Activated naive CD4-positive, alpha-beta T cell treated with anti-CD3 and anti-CD28 coated beads for 36 hours (primary cell): ENCODE measurements at regions of chr6 and their contacts with region 1.

Region 1: DNA sequence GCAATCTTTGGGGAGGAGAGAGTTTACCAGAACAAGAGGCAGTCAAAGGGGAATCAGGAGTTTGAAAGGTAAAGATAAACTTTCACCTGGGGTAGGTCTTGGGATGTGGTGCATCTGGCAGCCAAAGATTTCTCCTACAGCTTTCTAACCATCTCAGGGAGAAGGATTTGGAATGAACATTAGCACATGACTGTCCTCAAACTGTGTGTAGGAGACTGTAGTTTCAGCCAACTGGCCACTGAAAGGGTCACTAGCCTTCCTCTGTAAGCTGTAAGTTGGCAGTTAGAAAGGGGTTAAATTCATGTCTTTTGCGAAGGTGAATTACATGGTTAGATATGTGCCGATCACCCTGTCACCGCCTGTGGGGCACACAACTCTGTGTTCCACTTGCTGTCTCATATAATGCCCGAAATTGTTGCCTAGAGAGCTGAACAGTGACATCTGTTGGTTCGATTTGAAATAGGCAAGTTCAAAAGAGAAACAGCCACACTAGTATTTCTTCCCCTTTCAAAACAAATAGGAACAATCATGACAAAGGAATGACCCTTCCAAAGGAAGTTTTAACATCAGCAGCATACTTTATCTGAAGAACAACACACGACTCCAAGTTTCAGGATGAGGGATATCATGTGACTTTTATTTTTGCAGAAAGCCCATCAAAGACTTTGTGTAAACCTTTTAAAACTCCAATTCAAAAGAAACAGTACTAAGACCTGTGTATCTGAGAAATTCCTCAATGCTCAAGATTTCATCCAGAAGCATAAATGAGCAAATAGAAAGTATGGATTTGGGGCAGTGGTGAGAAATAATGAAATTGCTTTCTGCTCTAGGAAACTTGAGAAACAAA is 1.1 kb upstream of the OPN5 start:
- DNase-seq: peak; percentile 57
- H3K4me3 Mint-ChIP-seq: no peak overlapping the region
- H3K27ac Mint-ChIP-seq: no peak overlapping the region
- H3K4me1 Mint-ChIP-seq: peaks cover 5% of the 10 kb centered on the region
- H3K27me3 Mint-ChIP-seq: peaks cover 6% of the 10 kb centered on the region

Region 2: GRCh38 chr6:46848684-46849360 is 931.9 kb before region 1 on chr6:
- CTCF ChIA-PET with region 1: no interaction called
- intact Hi-C with region 1: loop called (anchors 2 kb)
- DNase-seq: peak; percentile 69
- H3K4me3 Mint-ChIP-seq: peak overlapping the region; percentile 32
- H3K27ac Mint-ChIP-seq: no peak overlapping the region
- H3K4me1 Mint-ChIP-seq: peaks cover 4% of the 10 kb centered on the region
- H3K27me3 Mint-ChIP-seq: peaks cover 30% of the 10 kb centered on the region

Region 3: GRCh38 chr6:47631269-47631772 is 149.4 kb before region 1 on chr6:
- CTCF ChIA-PET with region 1: interaction called, 71 read pairs
- intact Hi-C with region 1: loop called (anchors 1 kb)
- DNase-seq: no peak
- H3K4me3 Mint-ChIP-seq: no peak overlapping the region
- H3K27ac Mint-ChIP-seq: no peak overlapping the region
- H3K4me1 Mint-ChIP-seq: peaks cover 11% of the 10 kb centered on the region
- H3K27me3 Mint-ChIP-seq: no peaks in the 10 kb centered on the region

Region 4: DNA sequence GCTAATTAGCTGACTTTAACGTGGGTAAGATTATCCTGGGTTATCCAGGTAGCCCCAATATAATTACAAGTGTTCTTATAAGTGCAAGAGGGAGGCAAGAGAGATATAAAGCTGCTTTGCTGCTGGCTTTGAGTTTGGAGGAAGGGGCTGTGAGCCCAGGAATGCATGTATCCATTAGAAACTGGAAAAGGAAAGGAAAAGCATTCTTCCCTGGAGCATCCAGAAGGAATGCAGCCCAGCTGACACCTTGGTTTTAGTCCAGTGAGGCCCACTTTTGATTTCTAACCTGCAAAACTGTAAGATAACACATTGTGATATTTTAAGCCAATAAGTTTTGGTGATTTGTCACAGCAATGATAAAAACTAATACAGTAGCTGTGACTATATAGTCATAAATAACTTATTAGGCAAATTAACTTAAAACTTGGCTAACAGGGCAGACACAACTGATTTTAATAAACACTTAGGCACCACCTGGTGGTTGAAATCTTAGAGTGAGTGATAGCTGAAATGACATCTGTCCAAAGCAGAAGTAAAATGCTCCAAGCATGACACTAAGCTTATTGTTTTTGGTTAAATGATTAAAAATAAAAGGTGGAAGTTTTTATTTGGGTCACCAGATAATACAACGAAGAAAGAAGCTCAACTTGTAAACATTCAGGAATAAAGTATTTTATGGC is 46.7 kb before region 1 on chr6:
- CTCF ChIA-PET with region 1: interaction called, 18 read pairs
- intact Hi-C with region 1: loop called (anchors 1 kb)
- DNase-seq: peak; percentile 23
- H3K4me3 Mint-ChIP-seq: no peak overlapping the region
- H3K27ac Mint-ChIP-seq: no peak overlapping the region
- H3K4me1 Mint-ChIP-seq: peaks cover 18% of the 10 kb centered on the region
- H3K27me3 Mint-ChIP-seq: peaks cover 11% of the 10 kb centered on the region

Region 5: DNA sequence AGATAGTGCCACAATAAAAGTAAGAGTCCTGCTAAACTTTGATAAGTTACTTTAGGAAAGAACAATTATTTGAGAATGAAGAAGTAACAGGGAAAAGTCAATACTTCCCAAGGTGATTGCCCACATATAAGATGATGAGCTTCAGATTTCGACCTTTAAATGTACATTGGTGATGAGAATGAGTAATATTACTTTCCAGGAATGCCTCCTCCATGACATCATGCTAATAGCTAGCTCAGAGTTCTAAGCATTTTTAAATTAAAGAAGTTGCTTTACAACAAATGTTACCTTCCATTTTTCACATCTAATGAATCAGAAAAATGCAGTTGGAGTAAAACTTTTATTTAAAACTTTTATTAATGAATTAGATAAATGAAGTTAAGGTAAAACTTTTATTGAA is 21.4 kb before region 1 on chr6:
- CTCF ChIA-PET with region 1: interaction called, 10 read pairs
- intact Hi-C with region 1: no loop called
- DNase-seq: no peak
- H3K4me3 Mint-ChIP-seq: no peak overlapping the region
- H3K27ac Mint-ChIP-seq: no peak overlapping the region
- H3K4me1 Mint-ChIP-seq: no peaks in the 10 kb centered on the region
- H3K27me3 Mint-ChIP-seq: peaks cover 24% of the 10 kb centered on the region